GM12878 (cell line): ENCODE measurements at regions of chr9 and their contacts with region 1.

Region 1: DNA sequence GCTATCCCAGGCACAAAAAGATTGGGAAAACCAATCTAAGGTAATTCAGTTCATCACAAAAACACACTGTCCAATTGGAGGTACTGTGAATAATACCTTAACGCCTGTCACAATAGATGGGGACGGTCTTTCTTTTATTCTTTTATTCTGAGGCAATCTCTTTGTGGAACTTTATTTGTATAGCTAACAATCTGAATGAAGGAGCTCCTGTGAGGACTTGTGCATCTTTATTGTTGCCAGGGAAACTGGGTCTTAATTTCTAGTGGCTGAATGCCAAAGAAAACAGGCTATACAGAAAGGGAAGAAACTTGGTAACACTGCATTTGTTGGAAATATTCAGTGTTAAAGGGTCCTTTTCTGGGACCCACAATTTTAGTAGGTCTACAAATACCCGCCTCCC is 546.9 kb upstream of the C9orf72 start:
- DNase-seq: no peak
- ATAC-seq: no peak
- H3K4me3 ChIP-seq: no peak overlapping the region
- H3K27ac ChIP-seq: no peak overlapping the region
- H3K4me1 ChIP-seq: no peaks in the 10 kb centered on the region
- H3K27me3 ChIP-seq: no peaks in the 10 kb centered on the region
- CTCF ChIP-seq: no peak
- EP300 ChIP-seq: no peak
- POLR2A ChIP-seq: no peak
- RAD21 ChIP-seq: no peak

Region 2: DNA sequence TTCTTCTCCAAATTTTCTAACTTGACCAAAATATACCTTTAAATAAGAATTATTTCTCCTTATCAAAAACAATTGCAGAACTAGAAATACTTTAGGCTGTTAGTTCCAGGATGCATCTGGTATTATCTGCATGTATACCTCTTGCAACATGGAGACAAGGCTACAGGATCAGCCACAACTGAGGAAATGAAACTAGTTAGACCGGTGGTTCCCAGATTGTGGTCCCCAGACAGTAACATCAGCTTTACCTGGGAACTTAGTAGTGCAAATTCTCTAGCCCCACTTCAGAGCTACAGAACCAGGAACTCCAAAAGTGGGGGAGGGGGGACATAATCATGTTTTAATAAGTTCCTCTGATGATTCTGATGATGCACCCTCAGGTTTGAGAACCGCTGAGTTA is 485.3 kb before region 1 on chr9:
- CTCF ChIA-PET with region 1: no interaction called
- POLR2A ChIA-PET with region 1: no interaction called
- RAD21 ChIA-PET with region 1: no interaction called
- SMC1A ChIA-PET with region 1: no interaction called
- in situ Hi-C with region 1: no loop called
- intact Hi-C with region 1: no loop called
- DNase-seq: no peak
- ATAC-seq: peak; percentile 61
- H3K4me3 ChIP-seq: no peak overlapping the region
- H3K27ac ChIP-seq: no peak overlapping the region
- H3K4me1 ChIP-seq: no peaks in the 10 kb centered on the region
- H3K27me3 ChIP-seq: no peaks in the 10 kb centered on the region
- CTCF ChIP-seq: no peak
- EP300 ChIP-seq: no peak
- POLR2A ChIP-seq: no peak
- RAD21 ChIP-seq: no peak

Region 3: GRCh38 chr9:28032207-28032590 is 88.0 kb before region 1 on chr9:
- CTCF ChIA-PET with region 1: no interaction called
- POLR2A ChIA-PET with region 1: no interaction called
- RAD21 ChIA-PET with region 1: no interaction called
- SMC1A ChIA-PET with region 1: no interaction called
- in situ Hi-C with region 1: no loop called
- intact Hi-C with region 1: no loop called
- DNase-seq: no peak
- ATAC-seq: no peak
- H3K4me3 ChIP-seq: no peak overlapping the region
- H3K27ac ChIP-seq: no peak overlapping the region
- H3K4me1 ChIP-seq: no peaks in the 10 kb centered on the region
- H3K27me3 ChIP-seq: no peaks in the 10 kb centered on the region
- CTCF ChIP-seq: no peak
- EP300 ChIP-seq: no peak
- POLR2A ChIP-seq: no peak
- RAD21 ChIP-seq: no peak

Region 4: DNA sequence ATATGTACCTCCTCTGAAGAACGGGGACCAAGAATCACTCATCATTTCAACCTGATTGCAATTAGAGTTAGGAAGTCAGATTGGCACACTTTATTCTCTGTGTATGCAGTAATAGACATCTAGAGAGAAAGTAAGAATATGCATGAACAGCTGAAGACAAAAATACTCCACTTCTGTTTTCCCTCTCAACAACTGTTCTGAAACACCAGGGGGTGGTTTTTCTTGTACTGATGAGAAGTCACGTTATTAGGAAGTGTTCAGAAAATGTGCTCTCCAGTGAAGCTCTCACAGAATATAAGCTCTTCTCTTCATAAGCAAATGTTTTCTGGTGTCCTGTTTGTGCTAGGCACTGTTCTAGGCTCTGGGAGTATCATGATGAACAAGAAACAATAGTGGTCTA is 15.2 kb before region 1 on chr9:
- CTCF ChIA-PET with region 1: no interaction called
- POLR2A ChIA-PET with region 1: no interaction called
- RAD21 ChIA-PET with region 1: no interaction called
- SMC1A ChIA-PET with region 1: no interaction called
- in situ Hi-C with region 1: no loop called
- intact Hi-C with region 1: loop called (anchors 2 kb)
- DNase-seq: no peak
- ATAC-seq: no peak
- H3K4me3 ChIP-seq: no peak overlapping the region
- H3K27ac ChIP-seq: no peak overlapping the region
- H3K4me1 ChIP-seq: no peaks in the 10 kb centered on the region
- H3K27me3 ChIP-seq: no peaks in the 10 kb centered on the region
- CTCF ChIP-seq: no peak
- EP300 ChIP-seq: no peak
- POLR2A ChIP-seq: no peak
- RAD21 ChIP-seq: no peak